ENCODE measurements at regions of chr14 and their contacts with region 1.

Region 1: DNA sequence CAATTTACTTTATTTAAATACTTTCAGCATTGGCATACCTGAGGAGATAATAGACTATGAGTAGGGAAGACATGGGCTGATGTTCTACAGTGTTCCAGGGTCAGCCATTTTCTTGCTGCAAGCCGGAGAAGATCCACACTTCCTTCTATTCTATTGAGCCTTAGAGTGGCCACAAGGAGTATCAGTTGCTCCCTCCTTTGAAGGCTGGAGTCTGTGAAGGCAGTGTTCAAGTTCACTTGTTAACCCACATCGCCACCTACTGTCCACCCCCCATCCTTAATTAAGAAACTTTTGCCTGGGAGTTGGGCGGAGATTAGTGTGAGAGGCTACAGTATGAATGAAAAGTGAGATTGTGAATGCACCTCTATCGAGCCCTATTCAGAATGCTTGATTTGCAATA is 666.6 kb downstream of the NRXN3 start:
- DNase-seq: peak; percentile 37
- ATAC-seq: peak; percentile 78
- H3K4me3 ChIP-seq: no peak overlapping the region
- H3K27ac ChIP-seq: no peak overlapping the region
- H3K4me1 ChIP-seq: no peaks in the 10 kb centered on the region
- H3K27me3 ChIP-seq: no peaks in the 10 kb centered on the region
- CTCF ChIP-seq: peak; percentile 63
- EP300 ChIP-seq: no peak
- POLR2A ChIP-seq: no peak
- RAD21 ChIP-seq: no peak

Region 2: DNA sequence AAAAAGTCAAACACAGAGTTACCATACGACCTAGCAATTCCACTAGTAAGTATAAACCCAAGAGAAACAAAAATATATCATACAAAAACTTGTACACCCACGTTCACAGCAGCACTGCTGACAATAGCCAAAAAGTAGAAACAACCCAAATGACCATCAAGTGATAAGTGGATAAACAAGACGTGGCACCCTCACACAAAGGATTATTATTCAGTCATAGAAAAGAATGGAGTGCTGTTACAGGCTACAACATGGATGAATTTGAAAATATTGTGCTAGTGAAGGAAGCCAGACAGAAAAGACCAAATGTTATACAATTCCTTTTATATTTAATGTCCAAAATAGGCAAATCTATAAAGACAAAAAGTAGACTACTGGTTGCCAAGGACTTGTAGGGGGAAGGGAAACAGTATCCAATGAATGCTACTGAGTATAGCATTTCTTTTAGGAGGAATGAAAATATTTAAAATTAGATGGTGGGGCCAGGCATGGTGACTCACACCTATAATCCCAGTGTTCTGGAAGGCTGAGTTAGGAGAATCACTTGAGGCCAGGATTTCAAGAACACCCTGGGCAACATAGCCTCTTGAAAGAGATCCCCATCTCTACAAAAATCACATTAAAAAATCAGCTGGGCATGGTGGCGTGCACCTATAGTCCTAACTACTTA is 1262.2 kb before region 1 on chr14:
- CTCF ChIA-PET with region 1: no interaction called
- POLR2A ChIA-PET with region 1: no interaction called
- in situ Hi-C with region 1: no loop called
- intact Hi-C with region 1: no loop called
- DNase-seq: no peak
- ATAC-seq: no peak
- H3K4me3 ChIP-seq: no peak overlapping the region
- H3K27ac ChIP-seq: no peak overlapping the region
- H3K4me1 ChIP-seq: no peaks in the 10 kb centered on the region
- H3K27me3 ChIP-seq: no peaks in the 10 kb centered on the region
- CTCF ChIP-seq: no peak
- EP300 ChIP-seq: no peak
- POLR2A ChIP-seq: no peak
- RAD21 ChIP-seq: no peak

Region 3: DNA sequence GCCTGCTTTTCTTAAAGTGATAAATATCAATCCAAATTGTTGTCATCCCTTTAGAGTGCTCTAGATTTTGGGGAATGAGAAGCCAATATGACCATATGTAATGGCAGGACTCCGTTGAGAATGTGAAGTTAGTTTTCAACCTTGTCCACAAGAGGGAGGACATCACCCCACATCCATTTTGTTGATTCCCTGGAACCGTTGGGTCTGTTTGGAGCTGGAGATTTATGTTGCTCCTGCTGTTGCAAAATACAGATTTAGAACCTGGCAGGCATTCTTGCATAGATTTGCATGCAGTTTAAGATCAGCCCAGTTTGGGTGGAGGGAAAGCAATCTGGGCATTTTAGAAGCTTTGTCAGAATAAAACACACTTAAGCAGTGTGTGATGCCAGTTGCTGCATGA is 46.5 kb before region 1 on chr14:
- CTCF ChIA-PET with region 1: no interaction called
- POLR2A ChIA-PET with region 1: no interaction called
- in situ Hi-C with region 1: no loop called
- intact Hi-C with region 1: loop called (anchors 2 kb)
- DNase-seq: no peak
- ATAC-seq: 0 out of 3 replicates have a peak, but pooled peaks have one; percentile 25
- H3K4me3 ChIP-seq: no peak overlapping the region
- H3K27ac ChIP-seq: no peak overlapping the region
- H3K4me1 ChIP-seq: no peaks in the 10 kb centered on the region
- H3K27me3 ChIP-seq: no peaks in the 10 kb centered on the region
- CTCF ChIP-seq: no peak
- EP300 ChIP-seq: no peak
- POLR2A ChIP-seq: no peak
- RAD21 ChIP-seq: no peak